GM18951 (cell line): ENCODE measurements at regions of chr1 and their contacts with region 1.

Region 1: GRCh38 chr1:45569962-45570581 is 13.8 kb upstream of the NASP start:
- POLR2A ChIP-seq: no peak

Region 2: GRCh38 chr1:45011837-45012638 is 558.0 kb before region 1 on chr1 and contains the start of gene UROD:
- in situ Hi-C with region 1: loop called (anchors 10 kb)
- POLR2A ChIP-seq: peak; percentile 76

Region 3: DNA sequence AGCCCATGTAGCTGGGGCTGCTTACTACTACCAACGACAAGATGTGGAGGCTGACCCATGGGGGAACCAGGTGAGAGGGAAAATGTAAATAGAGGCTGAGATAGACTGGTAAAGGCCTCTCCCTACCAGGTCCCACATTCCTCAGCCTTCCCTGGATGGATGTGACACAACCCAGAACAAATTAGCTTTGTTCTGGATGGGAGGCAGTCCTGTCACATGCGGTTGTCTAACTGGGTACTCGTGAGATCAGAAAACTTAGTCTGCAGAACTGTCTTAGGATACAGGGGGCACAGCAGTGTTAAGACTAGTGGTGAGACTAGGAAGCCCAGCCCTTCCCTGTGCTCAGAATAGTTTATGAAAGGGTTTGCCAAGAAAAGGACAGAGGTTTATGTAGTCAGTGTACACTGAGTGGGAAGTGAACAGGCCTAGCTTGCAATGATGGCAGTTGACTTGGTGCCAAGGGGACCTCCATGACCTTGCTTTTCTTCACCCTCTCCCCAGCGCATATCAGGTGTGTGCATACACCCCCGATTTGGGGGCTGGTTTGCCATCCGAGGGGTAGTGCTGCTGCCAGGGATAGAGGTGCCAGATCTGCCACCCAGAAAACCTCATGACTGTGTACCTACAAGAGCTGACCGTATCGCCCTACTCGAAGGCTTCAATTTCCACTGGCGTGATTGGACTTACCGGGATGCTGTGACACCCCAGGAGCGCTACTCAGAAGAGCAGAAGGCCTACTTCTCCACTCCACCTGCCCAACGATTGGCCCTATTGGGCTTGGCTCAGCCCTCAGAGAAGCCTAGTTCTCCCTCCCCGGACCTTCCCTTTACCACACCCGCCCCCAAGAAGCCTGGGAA is 61.5 kb before region 1 on chr1:
- in situ Hi-C with region 1: loop called (anchors 5 kb)
- POLR2A ChIP-seq: peak; percentile 36